Heart right ventricle (tissue), 16 donors: ENCODE measurements at regions of chr2 and their contacts with region 1.

Region 1: GRCh38 chr2:20097879-20098714 is 46.7 kb upstream of the LAPTM4A start:
- DNase-seq: peak; percentile 79 to 85
- ATAC-seq: peak; percentile 76 to 89 (median 84)
- H3K4me3 ChIP-seq: no peak overlapping the region
- H3K27ac ChIP-seq: no peak overlapping the region
- H3K4me1 ChIP-seq: peaks cover 0 to 11% (median 6%) of the 10 kb centered on the region in 9 donors
- H3K27me3 ChIP-seq: peaks cover 0 to 4% (median 0%) of the 10 kb centered on the region in 7 donors
- CTCF ChIP-seq: peak; percentile 68 to 96 (median 91)

Region 2: GRCh38 chr2:19955544-19956422 is 142.3 kb before region 1 on chr2:
- intact Hi-C with region 1: loop called (anchors 1 to 5 kb)
- DNase-seq: peak; percentile 25 to 54
- ATAC-seq: peak; percentile 73 to 89 (median 84)
- H3K4me3 ChIP-seq: no peak overlapping the region
- H3K27ac ChIP-seq: no peak overlapping the region
- H3K4me1 ChIP-seq: no peaks in the 10 kb centered on the region
- H3K27me3 ChIP-seq: no peaks in the 10 kb centered on the region
- CTCF ChIP-seq: peak; percentile 54 to 89 (median 81)

Region 3: GRCh38 chr2:20130821-20131645 is 32.9 kb after region 1 on chr2:
- intact Hi-C with region 1: no loop called
- DNase-seq: no peak
- ATAC-seq: no peak
- H3K4me3 ChIP-seq: no peak overlapping the region
- H3K27ac ChIP-seq: no peak overlapping the region
- H3K4me1 ChIP-seq: peaks cover 0 to 9% (median 5%) of the 10 kb centered on the region in 9 donors
- H3K27me3 ChIP-seq: peaks cover 0 to 14% (median 4%) of the 10 kb centered on the region in 7 donors
- CTCF ChIP-seq: no peak

Region 4: GRCh38 chr2:20190876-20191713 is 93.0 kb after region 1 on chr2:
- intact Hi-C with region 1: no loop called
- DNase-seq: no peak
- ATAC-seq: no peak
- H3K4me3 ChIP-seq: no peak overlapping the region
- H3K27ac ChIP-seq: no peak overlapping the region
- H3K4me1 ChIP-seq: peaks cover 0 to 8% (median 0%) of the 10 kb centered on the region in 9 donors
- H3K27me3 ChIP-seq: no peaks in the 10 kb centered on the region
- CTCF ChIP-seq: no peak